ENCODE measurements at regions of chr2 and their contacts with region 1.

Region 1: GRCh38 chr2:231612179-231613053 is 19.8 kb downstream of the TEX44 start:
- DNase-seq: peak; percentile 94
- H3K4me3 Mint-ChIP-seq: peak overlapping the region; percentile 78
- H3K27ac Mint-ChIP-seq: peak overlapping the region; percentile 97
- H3K4me1 Mint-ChIP-seq: peaks cover 64% of the 10 kb centered on the region
- H3K27me3 Mint-ChIP-seq: peaks cover 28% of the 10 kb centered on the region

Region 2: DNA sequence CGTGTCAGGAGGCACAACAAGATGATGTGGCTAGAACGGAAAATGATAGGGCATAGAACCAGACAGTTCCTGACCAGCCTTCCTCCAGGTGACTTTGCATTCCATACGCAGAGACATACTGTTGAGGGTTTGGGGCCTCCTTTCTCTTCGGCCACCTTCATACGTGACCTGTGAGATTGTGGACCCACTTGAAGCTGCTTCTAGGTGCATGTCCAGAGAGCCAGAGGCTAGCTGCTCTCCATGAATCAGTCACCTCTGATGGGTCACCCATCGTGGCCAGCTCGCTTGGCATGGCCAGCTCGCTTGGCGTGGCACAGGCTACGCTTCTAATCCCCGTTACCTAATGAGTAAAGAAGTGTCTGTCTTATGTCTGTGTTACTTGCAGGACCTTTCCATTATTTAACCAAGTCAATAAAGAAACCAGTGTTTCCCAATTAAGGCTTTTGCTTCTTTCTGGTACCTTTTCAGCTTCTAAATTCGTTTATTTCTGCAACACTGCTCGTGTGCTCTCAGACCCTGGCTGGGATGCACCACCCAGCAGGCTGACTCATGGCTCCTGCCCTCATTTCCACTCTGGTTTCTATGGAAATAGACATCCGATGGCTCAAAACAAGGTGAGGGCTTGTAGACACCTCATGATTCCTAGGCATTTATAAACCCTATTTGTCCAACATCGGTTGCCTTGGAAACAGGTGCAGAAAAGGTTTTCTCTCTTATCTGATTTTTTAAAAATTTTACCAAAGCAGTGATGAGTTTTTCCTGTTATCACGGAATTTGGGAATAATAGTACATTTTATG is 303.6 kb before region 1 on chr2:
- CTCF ChIA-PET with region 1: no interaction called
- DNase-seq: no peak
- H3K4me3 Mint-ChIP-seq: no peak overlapping the region
- H3K27ac Mint-ChIP-seq: no peak overlapping the region
- H3K4me1 Mint-ChIP-seq: no peaks in the 10 kb centered on the region
- H3K27me3 Mint-ChIP-seq: peaks cover 21% of the 10 kb centered on the region

Region 3: GRCh38 chr2:231627384-231628120 is 15.1 kb after region 1 on chr2:
- CTCF ChIA-PET with region 1: interaction called, 19 read pairs
- DNase-seq: no peak
- H3K4me3 Mint-ChIP-seq: peak overlapping the region; percentile 58
- H3K27ac Mint-ChIP-seq: peak overlapping the region; percentile 94
- H3K4me1 Mint-ChIP-seq: peaks cover 32% of the 10 kb centered on the region
- H3K27me3 Mint-ChIP-seq: peaks cover 26% of the 10 kb centered on the region

Region 4: GRCh38 chr2:231648587-231649174 is 36.3 kb after region 1 on chr2:
- CTCF ChIA-PET with region 1: interaction called, 24 read pairs
- DNase-seq: peak; percentile 75
- H3K4me3 Mint-ChIP-seq: no peak overlapping the region
- H3K27ac Mint-ChIP-seq: no peak overlapping the region
- H3K4me1 Mint-ChIP-seq: peaks cover 6% of the 10 kb centered on the region
- H3K27me3 Mint-ChIP-seq: peaks cover 28% of the 10 kb centered on the region

Region 5: DNA sequence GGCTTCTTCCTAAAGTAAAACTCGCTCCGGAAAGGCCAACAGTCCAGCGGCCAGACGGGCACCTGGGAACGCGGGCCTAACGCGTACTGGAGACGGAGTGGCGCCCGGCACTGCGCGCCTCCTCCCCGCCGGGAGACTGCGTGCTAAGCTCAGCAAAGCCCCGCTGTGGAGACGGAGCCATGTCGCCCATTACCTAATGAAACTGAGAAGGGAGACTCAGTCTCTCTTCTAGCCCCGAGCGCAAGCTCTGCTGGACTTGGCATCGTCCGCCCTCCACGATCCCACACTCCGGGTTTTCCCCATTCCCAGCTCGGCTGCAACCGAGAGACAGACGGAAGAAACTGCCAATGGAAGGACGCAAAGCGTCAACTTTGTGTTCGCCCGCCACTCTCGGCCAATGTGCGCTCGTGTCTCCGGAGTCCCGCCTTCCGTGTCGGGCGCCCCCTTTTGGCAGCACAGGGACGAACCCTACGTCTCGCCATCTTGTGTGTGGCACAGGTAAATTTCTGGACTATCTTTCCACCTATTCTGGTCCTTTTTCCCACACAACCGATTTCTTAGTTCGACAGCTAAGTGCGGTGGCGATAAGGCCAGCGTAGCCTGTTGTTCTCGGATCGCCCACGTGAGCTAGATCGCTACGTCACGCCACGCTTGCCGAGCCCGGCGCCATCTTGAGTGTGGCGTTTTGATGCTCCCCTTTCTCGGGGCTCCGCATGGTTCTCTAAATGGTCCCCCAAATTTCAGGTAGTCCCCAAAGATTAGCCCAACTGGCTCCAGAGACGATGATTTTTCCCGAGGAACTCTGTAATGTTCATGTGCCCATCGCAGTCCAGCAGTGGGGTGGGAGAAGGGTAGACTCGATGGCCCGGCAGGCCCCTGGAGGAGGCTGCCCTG is 94.6 kb after region 1 on chr2:
- CTCF ChIA-PET with region 1: interaction called, 213 read pairs
- DNase-seq: peak; percentile 98
- H3K4me3 Mint-ChIP-seq: peak overlapping the region; percentile 93
- H3K27ac Mint-ChIP-seq: peak overlapping the region; percentile 100
- H3K4me1 Mint-ChIP-seq: peaks cover 30% of the 10 kb centered on the region
- H3K27me3 Mint-ChIP-seq: peaks cover 6% of the 10 kb centered on the region

Region 6: GRCh38 chr2:231727621-231728020 is 115.2 kb after region 1 on chr2:
- CTCF ChIA-PET with region 1: no interaction called
- DNase-seq: no peak
- H3K4me3 Mint-ChIP-seq: no peak overlapping the region
- H3K27ac Mint-ChIP-seq: no peak overlapping the region
- H3K4me1 Mint-ChIP-seq: peaks cover 2% of the 10 kb centered on the region
- H3K27me3 Mint-ChIP-seq: no peaks in the 10 kb centered on the region

Measured in activated naive CD4-positive, alpha-beta T cell treated with anti-CD3 and anti-CD28 coated beads, Interleukin-2, amount 10 ng/mL, durations not matched to agents 7 days and 5 days (primary cell).